MCF 10A (cell line): ENCODE measurements at regions of chr14 and their contacts with region 1.

Region 1: DNA sequence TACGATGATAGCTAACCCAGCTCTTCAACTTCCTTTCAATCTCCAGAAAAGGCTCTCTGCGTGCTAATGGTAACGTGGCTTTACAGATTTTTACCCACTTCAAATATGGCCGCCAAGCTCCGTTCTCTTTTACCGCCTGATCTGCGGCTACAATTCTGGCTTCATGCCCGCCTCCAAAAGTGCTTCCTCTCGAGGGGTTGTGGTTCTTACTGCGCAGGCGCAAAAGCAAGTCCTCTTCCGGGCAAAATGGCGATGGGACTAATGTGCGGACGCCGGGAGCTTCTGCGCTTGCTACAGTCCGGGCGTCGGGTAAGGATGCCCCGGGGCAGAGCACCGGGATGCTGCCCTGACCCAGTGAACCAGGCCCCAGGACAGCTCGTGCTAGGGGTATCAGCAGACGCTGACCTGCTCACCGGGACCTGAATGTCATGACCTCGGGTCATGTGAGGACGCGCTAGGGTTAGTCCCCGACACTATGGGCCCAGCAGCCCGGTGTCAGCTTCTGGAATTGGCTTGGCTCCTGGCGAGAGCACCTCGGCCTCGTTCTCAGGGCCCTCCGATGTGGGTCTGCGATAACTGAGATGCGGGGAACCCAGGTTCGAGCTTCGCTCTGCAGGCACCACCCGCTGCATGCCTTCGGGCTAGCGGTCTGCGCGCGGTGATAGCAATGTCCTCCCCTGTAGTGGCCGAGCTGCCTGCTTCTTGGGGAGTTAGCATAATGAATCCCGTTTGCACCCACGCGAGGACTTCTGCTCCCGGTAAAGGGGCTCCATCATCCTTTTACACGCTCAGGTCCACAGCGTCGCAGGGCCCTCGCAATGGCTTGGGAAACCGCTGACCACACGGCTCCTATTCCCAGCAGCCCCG is at the start of gene OXA1L:
- DNase-seq: peak; percentile 99
- H3K4me3 Mint-ChIP-seq: peak within 1 kb of the TSS; percentile 91
- H3K27ac Mint-ChIP-seq: peak within 1 kb of the TSS; percentile 99
- H3K4me1 Mint-ChIP-seq: peaks cover 21% of the 10 kb centered on the region
- H3K27me3 Mint-ChIP-seq: no peaks in the 10 kb centered on the region
- CTCF ChIP-seq: no peak
- total RNA-seq, gene OXA1L: 100 and 103 TPM in 2 replicates

Region 2: GRCh38 chr14:22598099-22598899 is 168.4 kb before region 1 on chr14 and contains the start of gene ABHD4:
- CTCF ChIA-PET with region 1: interaction called, 3 read pairs
- POLR2A ChIA-PET with region 1: interaction called, 19 read pairs
- intact Hi-C with region 1: no loop called
- DNase-seq: peak; percentile 60
- H3K4me3 Mint-ChIP-seq: peak within 1 kb of the TSS; percentile 97
- H3K27ac Mint-ChIP-seq: peak within 1 kb of the TSS; percentile 88
- H3K4me1 Mint-ChIP-seq: peaks cover 15% of the 10 kb centered on the region
- H3K27me3 Mint-ChIP-seq: peaks cover 26% of the 10 kb centered on the region
- CTCF ChIP-seq: no peak
- total RNA-seq, gene ABHD4: 10.3 and 16.7 TPM in 2 replicates

Region 3: DNA sequence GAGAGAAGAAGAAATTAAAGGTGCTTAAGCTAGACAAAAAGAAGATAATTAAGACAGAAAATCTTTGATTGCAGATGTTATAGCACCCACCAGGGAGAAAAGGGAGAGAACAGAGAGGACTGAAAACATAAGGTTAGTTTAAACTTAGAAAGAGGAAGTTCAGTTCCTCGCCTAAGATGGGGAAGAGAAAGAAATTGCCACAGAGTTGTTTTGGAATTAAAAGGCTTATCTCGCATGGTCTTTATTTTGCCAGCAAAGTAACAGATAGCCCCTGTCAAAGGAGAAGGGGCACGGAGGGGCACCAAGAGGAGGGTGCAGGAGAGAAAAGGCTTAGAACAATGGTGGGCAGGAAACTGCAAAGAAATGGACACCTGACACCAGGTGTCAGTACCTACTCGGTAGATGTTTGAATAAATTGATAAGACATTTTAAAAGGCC is 18.0 kb before region 1 on chr14:
- CTCF ChIA-PET with region 1: interaction called, 3 read pairs
- POLR2A ChIA-PET with region 1: interaction called, 17 read pairs
- intact Hi-C with region 1: no loop called
- DNase-seq: no peak
- H3K4me3 Mint-ChIP-seq: no peak overlapping the region
- H3K27ac Mint-ChIP-seq: no peak overlapping the region
- H3K4me1 Mint-ChIP-seq: no peaks in the 10 kb centered on the region
- H3K27me3 Mint-ChIP-seq: no peaks in the 10 kb centered on the region
- CTCF ChIP-seq: no peak

Region 4: GRCh38 chr14:22822571-22823098 is 55.9 kb after region 1 on chr14:
- CTCF ChIA-PET with region 1: interaction called, 5 read pairs
- POLR2A ChIA-PET with region 1: interaction called, 12 read pairs
- intact Hi-C with region 1: no loop called
- DNase-seq: peak; percentile 85
- H3K4me3 Mint-ChIP-seq: peak overlapping the region; percentile 29
- H3K27ac Mint-ChIP-seq: no peak overlapping the region
- H3K4me1 Mint-ChIP-seq: peaks cover 18% of the 10 kb centered on the region
- H3K27me3 Mint-ChIP-seq: no peaks in the 10 kb centered on the region
- CTCF ChIP-seq: peak; percentile 86

Region 5: DNA sequence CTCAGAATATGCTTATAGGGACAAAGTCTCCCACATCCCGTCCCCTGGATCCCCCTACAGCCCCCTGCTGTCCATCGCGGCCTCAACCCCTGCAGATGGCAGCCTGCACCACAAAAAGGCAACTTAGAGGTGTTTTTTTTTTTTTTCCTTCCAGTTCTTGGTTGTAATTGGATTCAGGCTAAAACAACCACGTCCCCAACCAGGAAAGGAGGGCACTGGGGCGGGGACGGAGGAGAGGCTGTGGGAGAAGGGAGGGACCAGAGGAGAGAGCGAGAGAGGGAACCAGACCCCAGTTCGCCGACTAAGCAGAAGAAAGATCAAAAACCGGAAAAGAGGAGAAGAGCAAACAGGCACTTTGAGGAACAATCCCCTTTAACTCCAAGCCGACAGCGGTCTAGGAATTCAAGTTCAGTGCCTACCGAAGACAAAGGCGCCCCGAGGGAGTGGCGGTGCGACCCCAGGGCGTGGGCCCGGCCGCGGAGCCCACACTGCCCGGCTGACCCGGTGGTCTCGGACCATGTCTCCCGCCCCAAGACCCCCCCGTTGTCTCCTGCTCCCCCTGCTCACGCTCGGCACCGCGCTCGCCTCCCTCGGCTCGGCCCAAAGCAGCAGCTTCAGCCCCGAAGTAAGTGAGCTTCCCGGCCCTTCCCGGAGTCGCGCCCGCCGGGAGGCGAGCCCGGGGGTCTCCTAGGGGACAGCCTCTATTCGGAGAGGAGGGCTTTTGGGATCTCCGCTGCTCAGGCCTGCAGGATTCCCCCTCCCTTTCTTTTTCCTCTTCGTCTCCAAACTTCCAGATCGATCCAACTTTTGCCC is 69.8 kb after region 1 on chr14 and contains the start of gene MMP14:
- CTCF ChIA-PET with region 1: interaction called, 16 read pairs
- POLR2A ChIA-PET with region 1: interaction called, 57 read pairs
- intact Hi-C with region 1: no loop called
- DNase-seq: peak; percentile 78
- H3K4me3 Mint-ChIP-seq: peak within 1 kb of the TSS; percentile 99
- H3K27ac Mint-ChIP-seq: peak within 1 kb of the TSS; percentile 98
- H3K4me1 Mint-ChIP-seq: peaks cover 21% of the 10 kb centered on the region
- H3K27me3 Mint-ChIP-seq: no peaks in the 10 kb centered on the region
- CTCF ChIP-seq: no peak
- total RNA-seq, gene MMP14: 71.5 and 78.6 TPM in 2 replicates